Astrocyte of the cerebellum (primary cell): ENCODE measurements at regions of chr3 and their contacts with region 1.

Region 1: DNA sequence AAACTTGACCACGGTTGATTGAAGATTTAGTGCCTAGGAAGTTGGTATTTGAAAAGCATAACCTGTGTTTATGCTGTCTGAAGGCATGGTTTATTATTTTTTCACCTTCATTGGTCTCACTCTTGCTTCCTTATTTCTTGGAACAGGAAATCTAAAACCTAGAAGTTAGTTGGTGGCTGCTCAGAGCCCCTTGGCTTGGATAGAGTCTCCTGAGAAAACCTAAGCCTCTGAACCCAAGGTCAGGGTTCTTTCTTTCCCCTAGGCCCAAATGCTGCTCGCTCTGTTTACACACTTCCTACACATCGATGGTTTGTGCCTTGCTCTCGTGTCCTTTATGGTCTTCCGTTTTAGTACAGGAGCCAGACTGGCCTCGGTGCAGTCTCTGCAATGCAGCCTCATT is 82.2 kb downstream of the TRAK1 start:
- DNase-seq: no peak
- H3K4me3 ChIP-seq: no peak overlapping the region
- CTCF ChIP-seq: no peak

Region 2: GRCh38 chr3:42101048-42101447 is 72.3 kb before region 1 on chr3:
- in situ Hi-C with region 1: no loop called
- DNase-seq: no peak
- H3K4me3 ChIP-seq: no peak overlapping the region
- CTCF ChIP-seq: no peak

Region 3: DNA sequence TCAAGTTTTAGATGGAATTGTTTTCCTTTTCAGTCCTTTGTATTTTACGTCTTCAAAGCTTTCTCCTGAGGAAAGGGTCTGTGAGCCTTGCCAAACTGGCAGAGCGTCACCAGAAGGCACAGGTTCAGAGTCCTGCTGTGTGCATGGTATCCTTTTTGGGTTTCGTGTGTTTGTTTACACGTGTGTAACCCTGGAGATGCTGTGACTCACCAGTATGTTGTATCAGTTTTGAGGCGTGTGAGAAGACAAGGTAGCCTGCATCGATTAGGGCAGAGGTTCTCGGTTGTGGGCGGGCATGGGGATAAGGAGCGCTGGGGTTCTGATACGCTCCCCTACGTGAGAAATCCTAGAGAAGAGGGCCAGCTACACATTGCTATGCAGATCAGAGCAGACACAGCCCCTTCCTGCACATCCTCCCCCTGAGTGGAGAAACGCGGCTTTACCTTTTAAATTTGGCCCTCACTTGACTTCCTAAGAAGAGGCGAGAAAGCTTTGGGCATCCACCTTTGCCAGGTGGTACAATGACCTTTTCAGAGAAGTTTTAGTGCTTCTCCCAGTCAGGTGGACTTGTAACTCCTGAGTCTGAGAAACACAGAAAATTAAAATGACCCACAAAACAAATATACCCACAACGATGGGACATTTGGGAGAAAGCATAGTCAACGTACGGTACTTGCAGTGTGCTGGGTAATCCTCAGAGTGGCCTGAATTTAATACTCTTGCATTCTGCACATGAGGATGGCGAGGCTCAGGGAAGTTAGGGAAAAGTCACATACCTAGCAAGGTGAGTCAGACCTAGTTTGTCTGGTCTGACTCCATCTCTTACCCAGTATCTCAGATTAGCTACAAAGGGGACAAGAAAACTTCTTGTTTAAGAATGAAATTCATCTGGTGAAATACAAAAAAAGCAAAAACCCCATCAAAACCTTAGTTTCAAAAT is 44.0 kb before region 1 on chr3:
- in situ Hi-C with region 1: loop called (anchors 5 kb)
- DNase-seq: peak; percentile 66
- H3K4me3 ChIP-seq: no peak overlapping the region
- CTCF ChIP-seq: no peak